Activated CD4-positive, alpha-beta T cell treated with anti-CD3 and anti-CD28 coated beads, Interleukin-2, amount 10 ng/mL, durations not matched to agents 7 days and 5 days (primary cell): ENCODE measurements at regions of chrX and their contacts with region 1.

Region 1: GRCh38 chrX:137031517-137032340 is 2.1 kb downstream of the GPR101 start:
- DNase-seq: peak; percentile 53
- H3K4me3 Mint-ChIP-seq: no peak overlapping the region
- H3K27ac Mint-ChIP-seq: no peak overlapping the region
- H3K4me1 Mint-ChIP-seq: peaks cover 8% of the 10 kb centered on the region
- H3K27me3 Mint-ChIP-seq: peaks cover 66% of the 10 kb centered on the region

Region 2: GRCh38 chrX:137051978-137052642 is 20.4 kb after region 1 on chrX:
- CTCF ChIA-PET with region 1: interaction called, 17 read pairs
- POLR2A ChIA-PET with region 1: no interaction called
- DNase-seq: peak; percentile 76
- H3K4me3 Mint-ChIP-seq: peak overlapping the region; percentile 75
- H3K27ac Mint-ChIP-seq: no peak overlapping the region
- H3K4me1 Mint-ChIP-seq: peaks cover 14% of the 10 kb centered on the region
- H3K27me3 Mint-ChIP-seq: peaks cover 36% of the 10 kb centered on the region